GM12878 (cell line): ENCODE measurements at regions of chr11 and their contacts with region 1.

Region 1: DNA sequence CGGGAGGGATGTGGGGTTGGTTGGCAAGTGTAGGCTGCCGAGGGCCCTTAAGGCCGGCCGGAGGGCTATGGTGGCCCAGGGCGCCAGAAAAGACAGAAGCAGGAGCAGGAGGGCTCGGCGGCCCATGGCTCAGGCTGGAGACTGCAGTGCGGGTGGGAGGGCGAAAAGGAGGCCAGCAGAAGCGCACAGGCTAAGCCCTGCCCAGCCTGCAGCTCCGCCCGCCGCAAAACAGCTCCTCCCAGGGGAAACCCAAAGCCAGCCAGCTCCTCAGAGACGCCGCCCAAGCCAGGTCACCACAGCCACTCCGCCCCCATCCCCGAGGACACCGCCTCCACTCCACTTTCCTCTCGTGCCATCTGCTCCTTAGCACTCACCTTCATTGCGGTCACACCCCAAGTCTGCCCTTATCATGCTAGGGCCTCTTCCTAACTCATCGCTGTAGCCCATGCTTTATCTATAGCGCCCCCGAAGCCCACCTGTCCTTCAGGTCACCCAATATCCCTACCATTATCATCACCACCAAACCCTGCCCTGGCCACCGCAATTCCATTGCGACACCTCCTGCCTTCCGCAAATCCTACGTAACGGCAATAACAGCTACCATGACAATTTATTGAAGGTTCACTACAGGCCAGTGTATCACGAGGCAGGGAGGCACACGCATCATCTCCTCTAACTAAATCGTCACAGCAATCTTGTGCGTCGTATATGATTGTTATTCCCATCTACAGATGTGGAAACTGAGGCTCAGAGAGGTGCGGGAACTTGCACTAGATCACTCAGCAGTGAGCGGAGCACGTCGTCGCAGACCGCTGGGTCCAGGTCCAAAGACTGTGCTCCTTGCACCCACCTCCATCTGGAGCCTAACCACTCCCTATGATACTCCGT is at the start of gene PRCP:
- DNase-seq: peak; percentile 84
- ATAC-seq: peak; percentile 88
- H3K4me3 ChIP-seq: peak within 1 kb of the TSS; percentile 82
- H3K27ac ChIP-seq: peak within 1 kb of the TSS; percentile 84
- H3K4me1 ChIP-seq: peaks cover 15% of the 10 kb centered on the region
- H3K27me3 ChIP-seq: no peaks in the 10 kb centered on the region
- CTCF ChIP-seq: no peak
- EP300 ChIP-seq: 0 out of 4 replicates have a peak, but pooled peaks of 1 of the 2 experiments have one; percentile 12
- POLR2A ChIP-seq: peak; percentile 84
- RAD21 ChIP-seq: no peak
- polyA plus RNA-seq, gene PRCP: 21.5 to 25.3 TPM

Region 2: DNA sequence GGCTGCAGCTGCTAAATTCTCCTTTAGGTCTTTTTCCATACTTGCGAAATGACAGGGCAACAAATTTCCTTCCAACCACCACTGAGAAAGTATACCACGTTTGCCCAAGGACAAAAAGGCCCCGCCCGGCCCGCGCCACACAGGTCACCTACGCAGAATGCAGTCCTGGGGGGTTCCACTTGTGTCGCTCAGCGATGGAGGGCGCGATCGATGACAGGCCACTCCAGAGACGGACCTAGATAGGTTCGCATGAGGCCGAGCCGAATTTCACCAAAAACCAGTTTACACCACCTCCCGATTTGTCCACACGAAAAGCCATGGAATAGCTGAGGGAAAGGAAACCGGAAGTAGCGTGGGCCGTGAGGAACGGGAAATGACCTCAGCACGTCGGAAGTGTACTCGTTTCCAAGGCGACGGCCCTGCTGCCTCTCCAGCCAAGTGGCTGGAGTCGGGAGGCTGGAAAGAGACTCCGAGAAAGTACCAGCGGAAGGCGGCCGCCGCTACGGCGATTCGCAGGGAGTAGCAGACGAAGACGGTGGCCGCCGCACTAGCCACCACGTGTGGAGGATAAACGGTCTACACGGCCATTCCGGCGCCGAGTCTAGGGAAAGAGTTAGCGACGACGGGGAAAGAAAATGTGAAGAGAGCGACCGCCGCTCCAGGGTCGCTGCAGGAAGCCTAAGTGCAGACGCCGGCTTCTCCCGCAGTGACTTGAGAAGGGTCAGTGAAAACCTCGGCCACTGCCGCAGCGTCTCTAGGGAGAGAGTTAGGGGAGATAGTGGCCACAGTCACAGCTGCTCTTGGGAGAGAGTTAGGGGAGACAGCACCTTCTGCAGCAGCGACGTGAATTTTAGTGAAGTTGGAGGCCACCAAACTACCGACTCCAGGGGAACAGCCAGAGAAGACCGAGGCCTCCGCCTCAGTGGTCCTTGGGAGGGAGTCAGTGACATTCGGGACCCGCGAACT is 293.1 kb after region 1 on chr11 and contains the start of gene ANKRD42:
- CTCF ChIA-PET with region 1: interaction called, 3 read pairs
- POLR2A ChIA-PET with region 1: no interaction called
- RAD21 ChIA-PET with region 1: no interaction called
- SMC1A ChIA-PET with region 1: interaction called, 6 read pairs
- in situ Hi-C with region 1: no loop called
- intact Hi-C with region 1: loop called (anchors 5 kb)
- DNase-seq: peak; percentile 77
- ATAC-seq: peak; percentile 89
- H3K4me3 ChIP-seq: peak within 1 kb of the TSS; percentile 92
- H3K27ac ChIP-seq: peak within 1 kb of the TSS; percentile 76
- H3K4me1 ChIP-seq: no peaks in the 10 kb centered on the region
- H3K27me3 ChIP-seq: no peaks in the 10 kb centered on the region
- CTCF ChIP-seq: no peak; a peak in 1 of 6 replicates
- EP300 ChIP-seq: no peak
- POLR2A ChIP-seq: peak; percentile 69; the same call in 1 of the 2 replicates
- RAD21 ChIP-seq: no peak
- polyA plus RNA-seq, gene ANKRD42: 0.68 to 2.0 TPM

Region 3: GRCh38 chr11:83285771-83286528 is 385.4 kb after region 1 on chr11 and contains the start of gene CCDC90B:
- CTCF ChIA-PET with region 1: interaction called, 3 read pairs
- POLR2A ChIA-PET with region 1: interaction called, 15 read pairs
- RAD21 ChIA-PET with region 1: interaction called, 7 read pairs
- SMC1A ChIA-PET with region 1: interaction called, 9 read pairs
- in situ Hi-C with region 1: loop called (anchors 10 kb)
- intact Hi-C with region 1: loop called (anchors 1 kb)
- DNase-seq: peak; percentile 96
- ATAC-seq: peak; percentile 93
- H3K4me3 ChIP-seq: peak within 1 kb of the TSS; percentile 78
- H3K27ac ChIP-seq: peak within 1 kb of the TSS; percentile 96
- H3K4me1 ChIP-seq: peaks cover 21% of the 10 kb centered on the region
- H3K27me3 ChIP-seq: no peaks in the 10 kb centered on the region
- CTCF ChIP-seq: peak in 2 of 3 experiments; percentile 30 to 75; a peak in 3 of 6 replicates
- EP300 ChIP-seq: 0 out of 4 replicates have a peak, but pooled peaks of 1 of the 2 experiments have one; percentile 42
- POLR2A ChIP-seq: peak; percentile 96
- RAD21 ChIP-seq: no peak
- polyA plus RNA-seq, gene CCDC90B: 76.2 to 82.8 TPM

Region 4: DNA sequence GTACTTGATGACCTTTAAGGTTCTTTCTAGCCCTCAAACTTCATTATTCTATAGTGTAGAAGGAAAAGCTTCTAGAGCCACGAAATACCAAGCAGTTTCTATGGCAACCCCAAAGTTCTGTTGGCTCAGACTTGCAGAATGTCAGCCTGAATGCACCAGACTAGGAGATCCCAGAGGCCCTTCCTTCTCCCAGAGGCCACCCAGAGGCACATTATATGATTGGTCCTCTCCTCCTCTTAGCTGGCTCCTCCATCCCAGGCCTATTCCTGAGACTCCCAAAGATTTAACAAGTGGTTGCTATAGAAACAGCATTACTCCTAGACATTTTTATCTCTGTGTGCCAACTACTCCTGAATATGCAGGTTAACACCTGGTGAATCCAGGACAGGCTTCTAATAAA is 454.9 kb after region 1 on chr11:
- CTCF ChIA-PET with region 1: no interaction called
- POLR2A ChIA-PET with region 1: no interaction called
- RAD21 ChIA-PET with region 1: no interaction called
- SMC1A ChIA-PET with region 1: no interaction called
- in situ Hi-C with region 1: no loop called
- intact Hi-C with region 1: no loop called
- DNase-seq: no peak
- ATAC-seq: no peak
- H3K4me3 ChIP-seq: no peak overlapping the region
- H3K27ac ChIP-seq: no peak overlapping the region
- H3K4me1 ChIP-seq: no peaks in the 10 kb centered on the region
- H3K27me3 ChIP-seq: no peaks in the 10 kb centered on the region
- CTCF ChIP-seq: no peak
- EP300 ChIP-seq: no peak
- POLR2A ChIP-seq: no peak
- RAD21 ChIP-seq: no peak